Endothelial cell of umbilical vein (primary cell): ENCODE measurements at regions of chr11 and their contacts with region 1.

Region 1: GRCh38 chr11:75204685-75205563 is 35.6 kb upstream of the TPBGL start:
- DNase-seq: peak; percentile 72
- H3K4me3 ChIP-seq: no peak overlapping the region
- H3K27ac ChIP-seq: no peak overlapping the region
- H3K4me1 ChIP-seq: no peaks in the 10 kb centered on the region
- H3K27me3 ChIP-seq: peaks cover 16% of the 10 kb centered on the region in 2 experiments
- CTCF ChIP-seq: peak; percentile 82 to 97
- POLR2A ChIP-seq: no peak

Region 2: GRCh38 chr11:73554671-73555320 is 1650.1 kb before region 1 on chr11:
- CTCF ChIA-PET with region 1: no interaction called
- POLR2A ChIA-PET with region 1: no interaction called
- dilution Hi-C with region 1: no loop called
- intact Hi-C with region 1: no loop called
- DNase-seq: no peak
- H3K4me3 ChIP-seq: no peak overlapping the region
- H3K27ac ChIP-seq: no peak overlapping the region
- H3K4me1 ChIP-seq: no peaks in the 10 kb centered on the region
- H3K27me3 ChIP-seq: no peaks in the 10 kb centered on the region
- CTCF ChIP-seq: no peak
- POLR2A ChIP-seq: no peak

Region 3: GRCh38 chr11:75022759-75023396 is 182.0 kb before region 1 on chr11:
- CTCF ChIA-PET with region 1: interaction called, 78 read pairs
- POLR2A ChIA-PET with region 1: no interaction called
- dilution Hi-C with region 1: no loop called
- intact Hi-C with region 1: loop called (anchors 1 kb)
- DNase-seq: peak; percentile 83
- H3K4me3 ChIP-seq: no peak overlapping the region
- H3K27ac ChIP-seq: no peak overlapping the region
- H3K4me1 ChIP-seq: no peaks in the 10 kb centered on the region
- H3K27me3 ChIP-seq: peaks cover 0 to 2% of the 10 kb centered on the region in 2 experiments
- CTCF ChIP-seq: peak; percentile 94 to 97
- POLR2A ChIP-seq: no peak

Region 4: GRCh38 chr11:75150879-75151278 is 54.0 kb before region 1 on chr11 and contains the start of gene SLCO2B1:
- CTCF ChIA-PET with region 1: interaction called, 1,202 read pairs
- POLR2A ChIA-PET with region 1: no interaction called
- dilution Hi-C with region 1: no loop called
- intact Hi-C with region 1: no loop called
- DNase-seq: no peak
- H3K4me3 ChIP-seq: no peak within 1 kb of the TSS
- H3K27ac ChIP-seq: no peak within 1 kb of the TSS
- H3K4me1 ChIP-seq: no peaks in the 10 kb centered on the region
- H3K27me3 ChIP-seq: peaks cover 15 to 24% of the 10 kb centered on the region in 2 experiments
- CTCF ChIP-seq: no peak
- POLR2A ChIP-seq: no peak
- total RNA-seq, gene SLCO2B1: not detected in 2 replicates

Region 5: DNA sequence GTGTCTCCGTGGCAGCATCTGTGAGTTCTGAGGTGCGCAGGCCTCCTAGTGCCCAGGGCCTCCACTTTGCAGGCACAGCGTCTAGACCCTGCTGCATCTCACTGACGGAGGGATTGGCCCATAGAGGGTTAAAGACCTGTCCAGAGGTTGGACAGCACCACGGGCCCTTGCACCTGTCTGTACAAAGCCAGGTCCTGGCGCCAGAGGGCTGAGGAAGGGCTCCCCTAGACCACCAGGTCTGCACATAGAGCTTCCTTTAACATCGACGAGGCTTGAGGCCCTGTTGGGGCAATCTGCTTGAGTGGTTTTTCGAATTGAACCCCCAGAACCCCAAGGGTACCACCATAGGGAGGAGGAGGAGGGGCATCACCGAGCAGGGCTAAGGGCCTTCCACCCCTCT is 28.1 kb before region 1 on chr11:
- CTCF ChIA-PET with region 1: interaction called, 20 read pairs
- POLR2A ChIA-PET with region 1: no interaction called
- dilution Hi-C with region 1: no loop called
- intact Hi-C with region 1: no loop called
- DNase-seq: no peak
- H3K4me3 ChIP-seq: no peak overlapping the region
- H3K27ac ChIP-seq: no peak overlapping the region
- H3K4me1 ChIP-seq: no peaks in the 10 kb centered on the region
- H3K27me3 ChIP-seq: peaks cover 0 to 10% of the 10 kb centered on the region in 2 experiments
- CTCF ChIP-seq: no peak
- POLR2A ChIP-seq: no peak

Region 6: GRCh38 chr11:75241036-75241905 is 36.3 kb after region 1 on chr11:
- CTCF ChIA-PET with region 1: interaction called, 55 read pairs
- POLR2A ChIA-PET with region 1: no interaction called
- dilution Hi-C with region 1: no loop called
- intact Hi-C with region 1: no loop called
- DNase-seq: peak; percentile 85
- H3K4me3 ChIP-seq: peak overlapping the region in 2 of 3 experiments; percentile 4 to 31
- H3K27ac ChIP-seq: no peak overlapping the region
- H3K4me1 ChIP-seq: peaks cover 7% of the 10 kb centered on the region
- H3K27me3 ChIP-seq: peaks cover 50 to 51% of the 10 kb centered on the region in 2 experiments
- CTCF ChIP-seq: peak; percentile 61 to 99
- POLR2A ChIP-seq: no peak